ENCODE measurements at regions of chr1 and their contacts with region 1.

Region 1: DNA sequence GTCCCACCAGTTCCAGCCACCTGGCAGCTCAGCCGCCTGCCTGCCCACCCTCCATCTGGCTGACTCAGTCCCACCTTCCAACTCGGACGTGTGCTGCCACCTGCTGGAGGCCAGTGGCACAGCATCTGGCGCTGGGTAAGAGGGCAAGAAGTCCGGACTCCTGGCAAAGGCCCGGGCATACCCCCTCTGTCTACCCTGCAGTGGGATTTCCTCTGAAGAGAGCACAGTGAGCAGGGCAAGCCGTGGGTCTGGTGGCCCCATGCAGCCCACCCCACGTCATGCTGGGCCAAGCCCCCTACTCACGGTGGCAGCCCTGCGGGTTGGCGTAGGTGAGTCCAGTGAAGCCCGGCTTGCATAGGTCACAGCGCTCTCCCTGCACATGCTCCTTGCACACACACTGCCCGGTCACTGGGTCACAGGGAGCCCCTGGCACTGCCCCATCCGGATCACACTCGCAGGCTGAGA is 24.5 kb downstream of the LAMB3 start:
- DNase-seq: peak; percentile 45 to 53
- H3K4me3 ChIP-seq: no peak overlapping the region
- H3K27ac ChIP-seq: no peak overlapping the region
- H3K4me1 ChIP-seq: no peaks in the 10 kb centered on the region
- H3K27me3 ChIP-seq: no peaks in the 10 kb centered on the region
- CTCF ChIP-seq: peak; percentile 93

Region 2: DNA sequence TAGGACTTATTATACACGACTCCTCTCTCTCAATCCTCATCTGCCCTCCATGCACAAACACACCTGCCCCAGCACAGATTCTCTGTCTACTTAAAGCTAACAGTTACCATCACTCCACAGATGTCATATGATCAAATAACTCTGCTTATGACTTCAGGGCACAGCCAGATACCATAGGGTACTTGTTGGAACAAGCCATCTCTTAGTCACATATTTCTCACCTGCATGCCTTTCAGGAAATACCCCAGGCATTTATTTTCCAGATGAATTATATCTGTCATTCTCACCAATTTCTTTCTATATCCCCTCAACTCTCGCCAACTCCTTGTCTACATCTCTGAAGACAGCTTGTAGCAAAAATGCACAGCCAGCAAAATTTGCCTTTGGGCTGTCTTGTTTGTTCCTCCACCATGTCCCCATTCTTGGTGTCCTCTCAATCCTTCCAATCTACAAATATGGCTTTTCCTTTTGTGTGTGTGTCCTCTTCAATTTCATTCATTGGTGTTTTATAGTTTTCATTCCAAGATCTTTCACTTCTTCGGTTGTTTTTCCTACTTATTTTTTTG is 398.2 kb before region 1 on chr1:
- CTCF ChIA-PET with region 1: no interaction called
- POLR2A ChIA-PET with region 1: no interaction called
- intact Hi-C with region 1: no loop called
- DNase-seq: no peak
- H3K4me3 ChIP-seq: no peak overlapping the region
- H3K27ac ChIP-seq: no peak overlapping the region
- H3K4me1 ChIP-seq: no peaks in the 10 kb centered on the region
- H3K27me3 ChIP-seq: no peaks in the 10 kb centered on the region
- CTCF ChIP-seq: no peak

Region 3: DNA sequence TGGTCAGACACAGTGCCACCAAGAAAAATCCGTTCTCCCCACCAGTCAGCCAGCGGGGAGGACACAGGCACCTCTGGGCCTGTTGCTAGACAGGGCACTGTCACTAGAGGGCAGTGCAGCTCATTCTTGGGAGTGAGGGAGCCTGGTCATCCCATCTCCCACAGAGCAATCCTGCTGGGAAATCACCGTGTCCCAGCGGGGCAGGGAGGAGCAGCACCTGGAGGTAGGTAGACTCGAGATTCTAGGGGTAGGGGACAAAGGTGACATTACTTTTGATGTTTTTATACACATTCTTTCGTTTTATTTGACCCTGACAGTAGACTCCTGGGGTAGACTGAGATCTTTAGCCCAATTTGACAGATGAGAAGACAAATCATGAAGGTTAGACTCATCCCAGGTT is 51.0 kb before region 1 on chr1:
- CTCF ChIA-PET with region 1: no interaction called
- POLR2A ChIA-PET with region 1: no interaction called
- intact Hi-C with region 1: loop called (anchors 1 kb)
- DNase-seq: peak; percentile 52 to 80
- H3K4me3 ChIP-seq: no peak overlapping the region
- H3K27ac ChIP-seq: no peak overlapping the region
- H3K4me1 ChIP-seq: no peaks in the 10 kb centered on the region
- H3K27me3 ChIP-seq: peaks cover 25% of the 10 kb centered on the region; the same call in 1 of the 2 replicates
- CTCF ChIP-seq: peak; percentile 89